Activated CD8-positive, alpha-beta T cell treated with anti-CD3 and anti-CD28 coated beads, Interleukin-2, amount 10 ng/mL, durations not matched to agents 7 days and 5 days (primary cell): ENCODE measurements at regions of chr11 and their contacts with region 1.

Region 1: GRCh38 chr11:122853971-122854446 is 15.7 kb downstream of the CRTAM start:
- DNase-seq: peak; percentile 75
- ATAC-seq: no peak
- H3K4me3 Mint-ChIP-seq: no peak overlapping the region
- H3K27ac Mint-ChIP-seq: no peak overlapping the region
- H3K4me1 Mint-ChIP-seq: peaks cover 60% of the 10 kb centered on the region
- H3K27me3 Mint-ChIP-seq: no peaks in the 10 kb centered on the region

Region 2: GRCh38 chr11:122578168-122578825 is 275.7 kb before region 1 on chr11:
- CTCF ChIA-PET with region 1: interaction called, 26 read pairs
- POLR2A ChIA-PET with region 1: no interaction called
- DNase-seq: no peak
- ATAC-seq: no peak
- H3K4me3 Mint-ChIP-seq: no peak overlapping the region
- H3K27ac Mint-ChIP-seq: no peak overlapping the region
- H3K4me1 Mint-ChIP-seq: peaks cover 12% of the 10 kb centered on the region
- H3K27me3 Mint-ChIP-seq: peaks cover 6% of the 10 kb centered on the region

Region 3: DNA sequence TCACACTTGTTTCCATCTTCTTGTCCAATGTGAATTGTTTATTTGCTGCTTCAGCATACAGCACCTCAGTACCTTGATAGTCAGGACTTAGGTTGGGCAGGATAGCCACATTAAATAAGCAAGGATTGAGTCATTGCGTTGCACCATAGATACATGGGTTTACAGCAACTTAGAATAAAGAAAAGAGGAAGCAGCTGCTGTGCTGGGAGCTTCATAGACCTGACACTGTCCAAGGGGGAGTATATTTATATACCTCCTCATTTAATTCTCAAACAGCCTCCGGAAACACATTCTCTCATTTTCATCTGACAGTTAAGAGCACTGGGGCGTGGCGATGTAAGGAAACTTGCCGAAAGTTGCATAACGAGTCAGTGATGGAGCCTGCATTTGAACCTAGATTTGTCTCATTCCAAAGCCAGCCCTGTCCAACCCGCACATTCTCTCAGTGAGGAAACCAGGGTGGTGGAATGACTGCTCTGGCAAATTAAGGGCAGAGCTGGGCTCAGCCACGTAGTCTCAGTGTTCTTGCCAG is 156.3 kb before region 1 on chr11:
- CTCF ChIA-PET with region 1: interaction called, 10 read pairs
- POLR2A ChIA-PET with region 1: no interaction called
- DNase-seq: peak; percentile 67
- ATAC-seq: peak; percentile 74
- H3K4me3 Mint-ChIP-seq: peak overlapping the region; percentile 57
- H3K27ac Mint-ChIP-seq: peak overlapping the region; percentile 90
- H3K4me1 Mint-ChIP-seq: peaks cover 89% of the 10 kb centered on the region
- H3K27me3 Mint-ChIP-seq: no peaks in the 10 kb centered on the region

Region 4: GRCh38 chr11:122796128-122796717 is 57.8 kb before region 1 on chr11:
- CTCF ChIA-PET with region 1: interaction called, 469 read pairs
- POLR2A ChIA-PET with region 1: interaction called, 17 read pairs
- DNase-seq: peak; percentile 76
- ATAC-seq: peak; percentile 86
- H3K4me3 Mint-ChIP-seq: no peak overlapping the region
- H3K27ac Mint-ChIP-seq: no peak overlapping the region
- H3K4me1 Mint-ChIP-seq: no peaks in the 10 kb centered on the region
- H3K27me3 Mint-ChIP-seq: no peaks in the 10 kb centered on the region

Region 5: GRCh38 chr11:122814401-122814800 is 39.6 kb before region 1 on chr11:
- CTCF ChIA-PET with region 1: interaction called, 337 read pairs
- POLR2A ChIA-PET with region 1: interaction called, 4 read pairs
- DNase-seq: peak; percentile 30
- ATAC-seq: no peak
- H3K4me3 Mint-ChIP-seq: no peak overlapping the region
- H3K27ac Mint-ChIP-seq: no peak overlapping the region
- H3K4me1 Mint-ChIP-seq: peaks cover 41% of the 10 kb centered on the region
- H3K27me3 Mint-ChIP-seq: no peaks in the 10 kb centered on the region

Region 6: DNA sequence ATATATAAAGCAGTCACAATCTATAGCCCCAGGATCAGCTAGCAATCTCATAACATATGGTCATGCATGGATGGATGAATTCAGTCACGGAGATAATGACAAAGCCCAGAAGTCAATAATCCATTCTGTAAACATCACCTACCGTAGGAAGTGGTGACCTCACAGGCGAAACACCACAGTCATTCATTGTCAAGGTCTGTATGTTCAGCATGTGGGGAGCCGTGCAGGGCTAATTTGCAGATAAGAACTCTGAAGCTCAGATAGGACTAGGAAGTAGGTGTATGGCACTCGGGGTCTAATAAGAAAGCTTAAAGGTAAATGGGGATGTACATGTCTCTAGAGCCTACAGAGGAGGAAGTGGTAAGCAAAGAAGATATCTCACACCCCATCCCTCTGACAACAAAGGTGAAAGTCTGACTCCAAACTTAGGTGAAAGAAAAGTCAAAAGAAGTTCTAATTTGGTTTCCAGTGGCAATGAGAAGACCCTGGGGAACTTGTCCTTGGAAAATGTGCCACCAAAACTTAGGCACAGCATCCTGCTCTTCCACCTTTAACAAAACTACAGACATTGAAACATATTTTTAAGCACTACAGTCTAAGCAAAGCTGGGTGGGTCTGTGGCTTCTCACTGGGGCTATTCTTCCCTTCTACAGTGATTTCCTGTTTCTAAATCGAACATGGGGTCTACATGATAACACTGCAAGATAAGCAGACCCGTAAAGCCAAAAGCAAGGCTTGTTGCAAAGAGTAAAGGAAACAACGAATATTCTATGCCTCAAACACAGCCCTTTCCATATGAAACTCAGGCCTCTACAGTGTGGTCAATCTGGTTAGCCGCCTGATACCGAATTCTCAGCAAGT is 10.5 kb before region 1 on chr11:
- CTCF ChIA-PET with region 1: interaction called, 194 read pairs
- POLR2A ChIA-PET with region 1: interaction called, 43 read pairs
- DNase-seq: peak; percentile 82
- ATAC-seq: peak; percentile 84
- H3K4me3 Mint-ChIP-seq: peak overlapping the region; percentile 67
- H3K27ac Mint-ChIP-seq: peak overlapping the region; percentile 94
- H3K4me1 Mint-ChIP-seq: peaks cover 80% of the 10 kb centered on the region
- H3K27me3 Mint-ChIP-seq: no peaks in the 10 kb centered on the region

Region 7: DNA sequence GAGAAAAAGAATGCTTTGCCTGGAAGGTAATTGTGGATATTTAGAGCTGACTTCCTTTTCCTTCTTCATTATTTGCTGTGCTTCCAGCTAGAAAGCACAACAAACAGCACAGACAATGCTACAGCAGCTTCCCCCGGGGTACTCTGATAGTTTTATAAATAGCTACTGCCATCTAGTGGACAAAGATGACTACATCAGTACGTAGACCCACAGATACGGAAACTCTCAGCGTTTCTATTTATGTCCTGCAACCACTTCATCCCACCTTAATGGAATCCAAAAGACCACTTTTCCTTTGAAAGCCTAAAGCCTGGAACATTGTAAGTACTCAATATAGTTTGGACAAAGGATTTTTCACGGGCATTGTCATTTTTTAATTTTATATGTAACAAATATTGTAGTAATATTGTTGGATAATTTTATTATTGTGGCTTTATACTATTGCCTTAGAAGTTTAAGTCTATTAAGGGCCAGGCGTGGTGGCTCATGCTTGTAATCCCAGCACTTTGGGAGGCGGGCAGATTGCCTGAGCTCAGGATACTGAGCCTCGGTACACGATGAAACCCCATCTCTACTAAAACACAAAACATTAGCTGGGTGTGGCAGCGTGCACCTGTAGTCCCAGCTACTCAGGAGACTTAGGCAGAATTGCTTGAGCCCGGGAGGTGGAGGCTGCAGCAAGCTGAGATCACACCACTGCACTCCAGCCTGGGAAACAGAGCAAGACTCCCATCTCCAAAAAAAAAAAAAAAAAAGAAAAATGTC is 200.5 kb after region 1 on chr11:
- CTCF ChIA-PET with region 1: interaction called, 10 read pairs
- POLR2A ChIA-PET with region 1: interaction called, 3 read pairs
- DNase-seq: peak; percentile 52
- ATAC-seq: peak; percentile 45
- H3K4me3 Mint-ChIP-seq: no peak overlapping the region
- H3K27ac Mint-ChIP-seq: peak overlapping the region; percentile 61
- H3K4me1 Mint-ChIP-seq: peaks cover 43% of the 10 kb centered on the region
- H3K27me3 Mint-ChIP-seq: no peaks in the 10 kb centered on the region